Left cardiac atrium (tissue), 4 donors: ENCODE measurements at regions of chr1 and their contacts with region 1.

Region 1: DNA sequence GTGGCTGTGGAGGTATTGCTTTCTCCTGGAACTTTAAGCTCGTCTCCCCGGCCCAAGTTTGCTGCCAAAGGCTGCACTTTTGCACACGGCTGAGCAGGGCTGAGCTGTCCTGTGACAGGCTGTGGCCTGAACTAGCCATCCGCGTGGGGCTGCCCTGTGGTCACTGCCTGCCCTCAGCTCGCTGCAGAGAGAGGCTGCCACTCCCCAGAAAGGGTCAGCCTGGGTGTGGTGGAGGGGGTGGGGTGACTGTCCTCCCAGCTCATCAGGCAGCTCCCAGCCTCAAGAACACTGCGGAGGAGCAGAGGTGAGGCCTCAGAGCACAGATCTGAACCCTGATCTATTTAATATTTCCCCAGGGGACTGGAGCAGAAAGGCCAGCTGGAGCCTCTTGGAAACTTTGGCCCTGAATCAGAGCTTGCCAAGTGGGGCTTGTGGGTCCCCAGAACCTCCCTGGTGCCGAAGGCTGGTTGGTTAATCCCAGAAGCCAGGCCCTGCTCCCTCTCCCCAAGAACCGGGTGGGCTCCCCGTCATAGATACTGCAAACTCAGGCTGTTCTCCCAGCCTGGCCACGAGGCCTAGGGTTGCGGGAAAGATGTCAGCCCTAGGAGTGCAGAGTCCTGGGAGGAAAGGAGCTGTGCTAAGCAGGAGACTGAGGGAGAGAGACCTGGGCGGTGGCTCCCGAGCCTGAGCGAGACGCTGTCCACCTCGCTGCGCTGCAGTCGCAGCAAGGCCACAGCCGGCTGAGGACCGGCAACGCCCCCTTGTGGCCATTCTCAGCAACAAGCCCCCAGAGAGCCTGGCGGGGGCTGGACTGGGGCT is 125.1 kb upstream of the IPO9 start:
- DNase-seq: peak; percentile 87
- ATAC-seq: peak; percentile 90

Region 2: GRCh38 chr1:201559679-201560162 is 144.1 kb before region 1 on chr1:
- intact Hi-C with region 1: loop called (anchors 1 to 5 kb)
- DNase-seq: peak; percentile 81
- ATAC-seq: peak; percentile 83 to 90

Region 3: GRCh38 chr1:201645956-201646355 is 57.9 kb before region 1 on chr1:
- intact Hi-C with region 1: loop called in 1 of 2 experiments (anchors 2 kb)
- DNase-seq: no peak
- ATAC-seq: no peak